Activated CD8-positive, alpha-beta T cell treated with anti-CD3 and anti-CD28 coated beads for 36 hours (primary cell): ENCODE measurements at regions of chr16 and their contacts with region 1.

Region 1: DNA sequence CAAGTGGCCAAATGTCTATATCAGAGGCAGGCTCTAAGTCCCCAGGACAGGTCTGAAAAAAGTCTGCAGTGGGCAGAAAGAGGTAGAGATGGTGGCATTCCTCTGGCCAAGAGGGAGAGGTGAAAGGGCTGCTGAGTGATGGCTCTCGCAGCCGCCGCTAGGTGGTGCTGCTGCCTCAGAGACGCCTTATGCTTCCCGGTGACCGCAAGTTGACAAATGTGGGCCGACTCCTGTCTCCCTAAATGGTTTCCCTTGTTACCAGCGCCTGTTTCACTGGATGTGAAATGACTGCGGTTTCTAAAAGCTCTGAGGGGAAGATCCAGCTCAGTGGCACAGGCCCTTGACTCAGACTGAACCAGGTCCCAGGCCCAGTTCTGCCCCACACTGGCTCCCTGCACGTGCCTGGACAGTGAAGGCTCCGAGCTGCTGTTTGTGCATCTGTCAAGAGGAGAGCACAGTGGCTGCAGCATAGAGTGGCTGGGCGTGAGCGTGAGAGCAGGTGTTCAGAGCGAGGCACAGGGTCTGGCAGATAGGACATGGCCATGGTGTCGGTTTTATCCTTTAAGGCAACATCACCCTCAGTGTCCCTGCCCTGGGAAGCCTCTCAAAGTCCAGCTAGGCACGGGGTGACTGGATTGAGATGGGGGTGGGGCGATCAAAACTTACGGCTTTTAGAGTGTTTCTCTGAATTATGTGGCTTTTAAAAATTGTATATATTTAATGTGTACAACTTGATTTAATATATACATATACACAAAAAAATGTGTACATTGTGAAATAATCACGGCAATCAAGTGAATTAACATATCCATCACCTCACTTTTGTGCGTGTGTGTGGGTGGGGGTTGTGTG is 19.9 kb downstream of the CLEC16A start:
- DNase-seq: peak; percentile 85
- ATAC-seq: peak; percentile 47
- H3K4me3 Mint-ChIP-seq: no peak overlapping the region
- H3K27ac Mint-ChIP-seq: peak overlapping the region; percentile 92
- H3K4me1 Mint-ChIP-seq: peaks cover 42% of the 10 kb centered on the region
- H3K27me3 Mint-ChIP-seq: no peaks in the 10 kb centered on the region
- CTCF ChIP-seq: peak; percentile 99

Region 2: DNA sequence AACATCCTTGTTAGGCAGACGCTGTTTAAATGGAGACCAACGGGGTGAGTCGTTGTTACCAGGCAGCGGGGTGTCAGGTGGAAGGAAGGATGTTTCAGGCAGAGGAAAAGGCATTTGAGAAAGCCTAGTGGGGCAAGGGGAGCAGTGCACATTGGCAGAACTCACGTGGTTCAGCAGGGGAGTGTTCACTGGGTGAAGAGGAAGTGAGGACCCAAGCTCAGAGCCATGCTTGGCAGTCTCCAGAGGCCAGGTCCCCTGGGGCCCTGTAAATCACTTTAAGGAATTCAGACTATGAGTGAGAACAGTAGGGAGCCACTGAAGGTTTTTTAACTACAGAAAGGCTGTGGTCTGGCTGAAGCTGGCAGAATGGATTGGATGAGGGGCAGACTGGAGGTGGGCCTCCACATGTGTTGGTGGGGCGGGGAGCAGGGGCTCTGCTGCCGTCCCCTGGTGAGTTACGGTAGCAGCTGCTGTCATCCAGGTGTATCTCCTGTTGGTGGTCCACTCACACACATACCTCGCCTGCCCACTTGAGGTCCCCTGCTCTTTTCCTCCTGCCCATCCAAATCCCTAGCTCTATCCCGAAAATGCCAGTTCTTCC is 14.8 kb before region 1 on chr16:
- CTCF ChIA-PET with region 1: interaction called, 121 read pairs
- POLR2A ChIA-PET with region 1: interaction called, 6 read pairs
- intact Hi-C with region 1: no loop called
- DNase-seq: peak; percentile 75
- ATAC-seq: peak; percentile 83
- H3K4me3 Mint-ChIP-seq: peak overlapping the region; percentile 18
- H3K27ac Mint-ChIP-seq: peak overlapping the region; percentile 68
- H3K4me1 Mint-ChIP-seq: peaks cover 57% of the 10 kb centered on the region
- H3K27me3 Mint-ChIP-seq: no peaks in the 10 kb centered on the region
- CTCF ChIP-seq: peak; percentile 43

Region 3: DNA sequence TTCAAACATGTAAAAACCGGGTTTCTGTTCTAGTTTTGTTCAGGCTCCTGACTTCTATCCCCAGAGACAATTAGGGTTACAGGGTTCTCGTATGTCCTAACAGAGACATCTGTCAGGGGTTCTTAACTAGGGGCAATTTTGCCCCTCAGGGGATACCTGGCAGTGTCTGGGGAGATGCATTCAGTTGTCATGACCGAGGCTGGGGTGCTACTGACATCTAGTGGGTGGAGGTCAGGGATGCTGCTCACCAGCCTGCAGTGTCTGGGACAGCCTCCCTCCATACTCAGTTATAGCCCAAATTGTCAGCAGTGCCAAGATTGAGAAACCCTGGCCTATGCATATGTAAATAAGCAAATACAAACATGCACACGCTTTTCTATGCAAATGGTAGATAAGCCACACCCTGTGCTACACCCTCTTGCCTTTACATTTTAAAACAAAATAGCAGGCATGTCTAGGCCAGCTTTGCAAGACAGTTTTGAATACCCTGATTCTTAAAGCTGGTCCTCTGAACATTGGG is 17.5 kb after region 1 on chr16:
- CTCF ChIA-PET with region 1: interaction called, 44 read pairs
- POLR2A ChIA-PET with region 1: no interaction called
- intact Hi-C with region 1: no loop called
- DNase-seq: peak; percentile 69
- ATAC-seq: peak; percentile 94
- H3K4me3 Mint-ChIP-seq: no peak overlapping the region
- H3K27ac Mint-ChIP-seq: no peak overlapping the region
- H3K4me1 Mint-ChIP-seq: peaks cover 16% of the 10 kb centered on the region
- H3K27me3 Mint-ChIP-seq: no peaks in the 10 kb centered on the region
- CTCF ChIP-seq: peak; percentile 55

Region 4: DNA sequence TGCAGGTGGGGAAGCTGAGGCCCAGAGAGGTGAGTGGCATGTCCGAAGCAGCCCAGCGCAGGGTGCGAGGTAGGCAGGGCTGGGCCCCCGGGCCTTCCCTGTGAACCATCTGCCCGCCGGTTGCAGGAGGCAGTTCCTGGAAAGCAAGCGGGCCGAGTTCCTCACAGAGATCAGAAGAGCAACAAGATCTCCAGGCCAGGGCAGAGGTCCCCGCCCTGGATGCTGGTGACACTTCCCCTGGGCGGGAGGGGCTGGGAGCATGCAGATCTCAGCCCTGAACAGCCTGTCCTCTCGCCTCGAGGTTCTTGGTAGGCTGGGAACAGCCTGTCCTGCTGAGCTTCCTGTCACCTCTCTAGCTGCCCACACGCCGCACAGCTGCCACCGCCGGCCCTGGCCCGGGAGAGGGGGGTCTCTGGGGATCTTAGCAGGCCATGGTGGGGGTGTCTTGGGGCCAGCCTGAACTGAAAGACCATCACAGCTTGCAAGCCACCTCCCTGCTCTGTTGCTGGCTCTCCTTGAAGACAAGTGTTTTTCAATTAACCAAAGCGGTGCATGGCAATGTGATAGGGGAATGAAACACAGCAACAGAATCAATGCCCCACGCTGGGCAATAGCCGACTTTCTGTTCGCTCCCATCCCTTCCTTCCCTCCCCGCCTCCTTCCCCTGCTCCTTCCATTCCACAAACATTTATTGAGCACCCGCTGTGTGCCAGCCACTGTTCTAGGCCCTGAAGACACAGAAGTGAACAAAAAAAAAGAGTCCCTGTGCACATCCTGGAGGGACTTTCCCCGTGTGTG is 260.0 kb after region 1 on chr16:
- CTCF ChIA-PET with region 1: interaction called, 10 read pairs
- POLR2A ChIA-PET with region 1: interaction called, 8 read pairs
- intact Hi-C with region 1: no loop called
- DNase-seq: peak; percentile 91
- ATAC-seq: peak; percentile 65
- H3K4me3 Mint-ChIP-seq: peak overlapping the region; percentile 63
- H3K27ac Mint-ChIP-seq: peak overlapping the region; percentile 98
- H3K4me1 Mint-ChIP-seq: peaks cover 55% of the 10 kb centered on the region
- H3K27me3 Mint-ChIP-seq: no peaks in the 10 kb centered on the region
- CTCF ChIP-seq: no peak

Region 5: DNA sequence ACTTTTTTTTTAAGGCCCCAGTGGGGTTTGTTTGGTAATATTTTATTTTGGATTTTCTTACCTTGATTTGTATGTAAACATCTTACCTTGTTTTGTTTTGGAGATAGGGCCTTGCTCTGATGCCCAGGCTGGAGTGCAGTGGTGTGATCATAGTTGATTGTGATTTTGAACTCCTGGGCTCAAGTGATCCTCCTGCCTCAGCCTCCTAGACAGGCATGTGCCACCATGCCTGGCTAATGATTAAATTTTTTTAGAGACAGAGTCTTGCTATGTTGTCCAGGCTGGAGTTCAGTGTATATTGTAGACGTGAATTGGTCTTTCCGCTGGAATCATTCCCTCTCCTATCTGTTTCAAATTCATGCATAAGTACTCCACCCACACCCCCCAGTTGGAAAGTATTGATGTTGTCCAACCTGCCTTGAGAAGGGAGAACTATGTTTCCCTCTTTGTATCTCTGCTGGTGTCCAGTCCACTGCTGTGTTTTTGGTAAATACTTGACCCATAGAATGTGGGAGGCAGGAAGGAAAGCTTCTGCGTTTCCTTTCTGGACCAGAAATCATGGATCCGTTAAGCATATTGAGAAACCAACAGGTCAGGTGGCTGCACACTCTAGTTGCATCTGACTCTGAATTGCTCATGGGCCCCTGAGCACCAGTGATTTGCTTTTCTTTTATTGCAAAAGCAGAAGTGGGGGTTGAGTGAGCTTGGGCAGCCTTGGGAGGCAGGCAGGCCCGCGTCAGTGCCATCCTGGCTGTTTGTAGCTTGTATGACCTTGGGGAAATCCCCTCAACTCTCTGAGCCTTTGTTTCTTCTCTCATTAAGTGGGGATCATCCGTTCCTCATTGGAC is 406.0 kb after region 1 on chr16:
- CTCF ChIA-PET with region 1: interaction called, 27 read pairs
- POLR2A ChIA-PET with region 1: no interaction called
- intact Hi-C with region 1: no loop called
- DNase-seq: no peak
- ATAC-seq: peak; percentile 24
- H3K4me3 Mint-ChIP-seq: no peak overlapping the region
- H3K27ac Mint-ChIP-seq: no peak overlapping the region
- H3K4me1 Mint-ChIP-seq: peaks cover 8% of the 10 kb centered on the region
- H3K27me3 Mint-ChIP-seq: no peaks in the 10 kb centered on the region
- CTCF ChIP-seq: no peak

Region 6: GRCh38 chr16:11379420-11379819 is 415.2 kb after region 1 on chr16:
- CTCF ChIA-PET with region 1: interaction called, 27 read pairs
- POLR2A ChIA-PET with region 1: no interaction called
- intact Hi-C with region 1: no loop called
- DNase-seq: peak; percentile 72
- ATAC-seq: peak; percentile 93
- H3K4me3 Mint-ChIP-seq: no peak overlapping the region
- H3K27ac Mint-ChIP-seq: peak overlapping the region; percentile 67
- H3K4me1 Mint-ChIP-seq: peaks cover 13% of the 10 kb centered on the region
- H3K27me3 Mint-ChIP-seq: no peaks in the 10 kb centered on the region
- CTCF ChIP-seq: no peak